ENCODE measurements at regions of chr11 and their contacts with region 1.

Region 1: DNA sequence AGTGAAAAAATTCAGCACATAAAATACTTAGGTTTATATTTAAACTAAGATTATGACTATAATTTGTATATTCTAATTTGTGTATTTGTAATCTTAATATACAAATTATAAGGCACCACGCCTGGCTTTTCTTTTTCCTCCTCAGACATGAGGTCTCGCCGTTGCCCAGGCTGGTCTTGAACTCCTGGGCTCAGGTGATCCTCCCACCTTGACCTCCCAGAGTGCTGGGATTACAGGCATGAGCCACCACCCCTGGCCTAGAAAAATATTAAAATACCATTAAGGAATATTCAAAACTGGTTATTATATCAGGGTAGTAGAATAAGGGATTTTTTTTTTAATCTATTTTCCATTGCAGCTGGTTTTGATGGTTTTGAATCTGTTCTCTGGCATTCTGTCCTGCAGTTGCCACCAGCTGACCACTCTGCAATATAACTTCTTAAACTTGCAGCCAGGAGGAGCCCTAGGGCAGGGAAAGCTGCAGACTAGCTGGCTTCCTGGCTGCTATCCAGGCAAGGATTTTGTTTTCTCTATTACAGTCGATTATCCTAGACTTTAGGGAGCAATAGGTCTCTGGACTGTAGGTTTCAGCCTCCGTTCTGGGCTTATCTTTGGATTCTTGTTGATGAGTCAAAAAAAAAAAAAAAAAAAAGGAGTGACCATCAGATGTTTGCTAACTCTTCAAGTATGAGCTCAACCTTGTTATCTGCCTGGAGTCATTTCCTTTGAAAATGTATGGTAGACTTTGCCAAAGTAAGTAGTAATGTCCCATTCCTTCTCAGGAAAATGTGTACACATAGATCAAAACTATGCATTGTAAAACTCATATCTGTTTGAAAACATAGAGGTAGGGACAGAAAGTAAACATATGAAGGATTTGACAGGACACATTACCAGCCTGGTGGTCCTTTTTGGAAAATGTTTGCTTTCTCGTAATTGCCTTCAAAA is 13.2 kb downstream of the POLA2 start:
- DNase-seq: peak in 5 of 9 experiments; percentile 13 to 59 (median 44)
- ATAC-seq: peak; percentile 48
- H3K4me3 ChIP-seq: no peak overlapping the region
- H3K4me3 Mint-ChIP-seq: no peak overlapping the region
- H3K27ac ChIP-seq: no peak overlapping the region
- H3K27ac Mint-ChIP-seq: no peak overlapping the region
- H3K4me1 ChIP-seq: no peaks in the 10 kb centered on the region
- H3K4me1 Mint-ChIP-seq: no peaks in the 10 kb centered on the region
- H3K27me3 ChIP-seq: no peaks in the 10 kb centered on the region
- H3K27me3 Mint-ChIP-seq: no peaks in the 10 kb centered on the region
- CTCF ChIP-seq: peak; percentile 44

Region 2: DNA sequence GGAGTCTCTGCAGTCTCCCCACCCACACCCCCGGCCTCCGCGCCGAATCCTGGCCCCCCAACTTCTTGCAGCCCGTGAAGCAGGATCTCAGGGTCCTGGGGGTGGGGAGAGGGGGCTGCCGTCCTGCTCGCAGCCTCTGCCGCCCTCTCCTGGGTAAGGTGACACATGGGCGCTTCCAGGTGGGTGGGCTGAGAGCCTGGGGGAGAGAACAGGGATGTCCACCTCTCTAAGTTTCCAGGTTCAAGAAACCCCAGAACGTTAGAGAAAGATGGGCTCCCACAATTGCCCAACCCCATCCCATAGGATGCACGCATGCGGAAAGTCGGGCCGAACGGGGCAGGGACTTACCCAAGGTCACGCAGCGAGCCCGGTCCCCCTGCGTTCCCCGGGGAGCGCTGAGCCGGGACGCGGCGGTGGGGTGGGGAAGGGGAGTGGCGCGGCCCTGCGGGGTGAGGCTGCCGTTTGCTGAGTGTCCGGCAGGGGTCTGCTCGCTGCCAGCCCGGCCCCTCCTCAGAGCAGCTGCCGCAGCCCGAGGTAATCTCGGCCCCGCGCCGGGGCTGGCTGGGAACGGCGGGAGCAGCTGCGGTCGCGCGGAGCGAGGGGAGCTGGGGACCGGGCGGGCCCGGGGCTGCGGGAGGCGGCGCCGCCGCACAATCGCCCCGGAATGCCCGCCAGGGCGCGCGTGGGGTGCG is 94.0 kb before region 1 on chr11:
- CTCF ChIA-PET with region 1: no interaction called
- POLR2A ChIA-PET with region 1: no interaction called
- intact Hi-C with region 1: no loop called
- DNase-seq: peak; percentile 17 to 73 (median 53)
- ATAC-seq: peak; percentile 68
- H3K4me3 ChIP-seq: peak overlapping the region; percentile 85 to 95
- H3K4me3 Mint-ChIP-seq: peak overlapping the region; percentile 91
- H3K27ac ChIP-seq: peak overlapping the region in 1 of 2 experiments; percentile 23
- H3K27ac Mint-ChIP-seq: peak overlapping the region; percentile 80
- H3K4me1 ChIP-seq: peaks cover 24% of the 10 kb centered on the region
- H3K4me1 Mint-ChIP-seq: peaks cover 28% of the 10 kb centered on the region
- H3K27me3 ChIP-seq: no peaks in the 10 kb centered on the region
- H3K27me3 Mint-ChIP-seq: no peaks in the 10 kb centered on the region
- CTCF ChIP-seq: peak; percentile 57

Region 3: DNA sequence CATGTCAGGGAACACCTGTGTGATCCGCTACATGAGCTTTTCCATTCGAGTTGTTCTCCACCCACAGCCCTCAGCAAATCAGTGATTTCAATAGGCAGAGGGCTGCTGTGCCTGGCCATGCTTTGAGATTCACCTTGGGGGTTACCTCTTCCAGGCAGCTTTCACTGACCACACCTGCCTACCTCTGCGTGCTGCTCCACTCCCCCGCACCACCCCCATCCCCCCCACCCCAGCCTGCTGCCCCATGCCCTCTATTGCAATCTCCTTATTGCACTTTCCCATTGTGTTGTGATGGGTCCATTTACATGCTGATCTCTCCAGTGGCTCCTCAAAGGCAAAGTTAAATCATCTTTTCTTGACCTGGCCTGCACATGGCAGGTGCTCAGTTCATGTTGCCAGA is 31.2 kb before region 1 on chr11:
- CTCF ChIA-PET with region 1: no interaction called
- POLR2A ChIA-PET with region 1: no interaction called
- intact Hi-C with region 1: loop called in 1 of 2 experiments (anchors 5 kb)
- DNase-seq: no peak
- ATAC-seq: no peak
- H3K4me3 ChIP-seq: no peak overlapping the region
- H3K4me3 Mint-ChIP-seq: no peak overlapping the region
- H3K27ac ChIP-seq: no peak overlapping the region
- H3K27ac Mint-ChIP-seq: no peak overlapping the region
- H3K4me1 ChIP-seq: no peaks in the 10 kb centered on the region
- H3K4me1 Mint-ChIP-seq: no peaks in the 10 kb centered on the region
- H3K27me3 ChIP-seq: no peaks in the 10 kb centered on the region
- H3K27me3 Mint-ChIP-seq: no peaks in the 10 kb centered on the region
- CTCF ChIP-seq: no peak

Region 4: DNA sequence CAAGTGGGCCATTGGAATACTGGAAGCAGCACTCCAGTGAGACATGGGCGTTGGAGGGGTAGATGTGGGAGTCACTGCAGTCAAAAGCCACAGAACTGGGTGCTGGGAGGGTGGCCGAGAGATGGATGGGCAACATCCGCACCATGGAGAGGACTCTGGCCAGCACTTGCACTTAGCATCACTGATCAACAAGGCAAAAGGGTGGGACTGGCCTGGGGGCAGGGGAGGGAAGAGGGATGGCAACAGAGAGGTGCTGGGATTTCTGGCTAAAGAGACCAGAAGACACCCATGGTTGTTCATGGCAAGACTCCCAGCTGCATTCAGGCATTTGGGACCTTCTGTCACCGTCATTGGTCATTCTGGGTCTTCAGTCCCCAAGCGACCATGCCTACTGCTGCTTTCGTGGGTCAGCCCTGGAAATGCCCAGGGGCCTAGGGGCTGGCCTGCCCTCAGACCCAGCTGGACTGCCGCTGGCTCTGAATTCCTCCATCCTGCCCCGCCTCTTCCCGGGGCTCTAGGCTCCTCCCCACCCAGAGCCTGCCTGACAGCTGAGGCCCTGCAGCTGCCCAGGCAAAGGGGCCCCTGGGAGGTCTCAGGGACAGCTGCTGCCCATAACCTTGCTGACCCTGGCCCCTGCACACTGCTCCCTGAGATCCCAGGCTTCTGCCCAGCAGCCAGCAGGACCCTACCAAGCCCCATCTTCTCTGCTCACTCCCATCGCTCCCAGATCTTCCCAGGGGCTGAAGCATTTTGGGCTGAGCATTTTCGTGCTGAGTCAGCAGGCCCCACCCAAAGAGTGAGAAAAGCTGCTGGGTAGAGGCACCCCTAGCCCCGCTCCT is 26.7 kb after region 1 on chr11:
- CTCF ChIA-PET with region 1: no interaction called
- POLR2A ChIA-PET with region 1: no interaction called
- intact Hi-C with region 1: no loop called
- DNase-seq: no peak
- ATAC-seq: no peak
- H3K4me3 ChIP-seq: no peak overlapping the region
- H3K4me3 Mint-ChIP-seq: no peak overlapping the region
- H3K27ac ChIP-seq: no peak overlapping the region
- H3K27ac Mint-ChIP-seq: no peak overlapping the region
- H3K4me1 ChIP-seq: no peaks in the 10 kb centered on the region
- H3K4me1 Mint-ChIP-seq: no peaks in the 10 kb centered on the region
- H3K27me3 ChIP-seq: no peaks in the 10 kb centered on the region
- H3K27me3 Mint-ChIP-seq: no peaks in the 10 kb centered on the region
- CTCF ChIP-seq: no peak

Region 5: DNA sequence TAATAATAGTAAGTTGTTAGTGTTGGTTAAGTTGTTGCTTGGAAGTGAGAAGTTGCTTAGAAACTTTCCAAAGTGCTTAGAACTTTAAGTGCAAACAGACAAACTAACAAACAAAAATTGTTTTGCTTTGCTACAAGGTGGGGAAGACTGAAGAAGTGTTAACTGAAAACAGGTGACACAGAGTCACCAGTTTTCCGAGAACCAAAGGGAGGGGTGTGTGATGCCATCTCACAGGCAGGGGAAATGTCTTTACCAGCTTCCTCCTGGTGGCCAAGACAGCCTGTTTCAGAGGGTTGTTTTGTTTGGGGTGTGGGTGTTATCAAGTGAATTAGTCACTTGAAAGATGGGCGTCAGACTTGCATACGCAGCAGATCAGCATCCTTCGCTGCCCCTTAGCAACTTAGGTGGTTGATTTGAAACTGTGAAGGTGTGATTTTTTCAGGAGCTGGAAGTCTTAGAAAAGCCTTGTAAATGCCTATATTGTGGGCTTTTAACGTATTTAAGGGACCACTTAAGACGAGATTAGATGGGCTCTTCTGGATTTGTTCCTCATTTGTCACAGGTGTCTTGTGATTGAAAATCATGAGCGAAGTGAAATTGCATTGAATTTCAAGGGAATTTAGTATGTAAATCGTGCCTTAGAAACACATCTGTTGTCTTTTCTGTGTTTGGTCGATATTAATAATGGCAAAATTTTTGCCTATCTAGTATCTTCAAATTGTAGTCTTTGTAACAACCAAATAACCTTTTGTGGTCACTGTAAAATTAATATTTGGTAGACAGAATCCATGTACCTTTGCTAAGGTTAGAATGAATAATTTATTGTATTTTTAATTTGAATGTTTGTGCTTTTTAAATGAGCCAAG is 150.3 kb after region 1 on chr11:
- CTCF ChIA-PET with region 1: no interaction called
- POLR2A ChIA-PET with region 1: no interaction called
- intact Hi-C with region 1: no loop called
- DNase-seq: peak; percentile 72 to 98 (median 82)
- ATAC-seq: peak; percentile 48
- H3K4me3 ChIP-seq: peak overlapping the region; percentile 76 to 95
- H3K4me3 Mint-ChIP-seq: peak overlapping the region; percentile 94
- H3K27ac ChIP-seq: peak overlapping the region; percentile 99 to 100
- H3K27ac Mint-ChIP-seq: peak overlapping the region; percentile 98
- H3K4me1 ChIP-seq: peaks cover 53% of the 10 kb centered on the region
- H3K4me1 Mint-ChIP-seq: peaks cover 66% of the 10 kb centered on the region
- H3K27me3 ChIP-seq: no peaks in the 10 kb centered on the region
- H3K27me3 Mint-ChIP-seq: no peaks in the 10 kb centered on the region
- CTCF ChIP-seq: no peak

Measured in CD8-positive, alpha-beta T cell (primary cell).